ENCODE measurements at regions of chr19 and their contacts with region 1.

Region 1: DNA sequence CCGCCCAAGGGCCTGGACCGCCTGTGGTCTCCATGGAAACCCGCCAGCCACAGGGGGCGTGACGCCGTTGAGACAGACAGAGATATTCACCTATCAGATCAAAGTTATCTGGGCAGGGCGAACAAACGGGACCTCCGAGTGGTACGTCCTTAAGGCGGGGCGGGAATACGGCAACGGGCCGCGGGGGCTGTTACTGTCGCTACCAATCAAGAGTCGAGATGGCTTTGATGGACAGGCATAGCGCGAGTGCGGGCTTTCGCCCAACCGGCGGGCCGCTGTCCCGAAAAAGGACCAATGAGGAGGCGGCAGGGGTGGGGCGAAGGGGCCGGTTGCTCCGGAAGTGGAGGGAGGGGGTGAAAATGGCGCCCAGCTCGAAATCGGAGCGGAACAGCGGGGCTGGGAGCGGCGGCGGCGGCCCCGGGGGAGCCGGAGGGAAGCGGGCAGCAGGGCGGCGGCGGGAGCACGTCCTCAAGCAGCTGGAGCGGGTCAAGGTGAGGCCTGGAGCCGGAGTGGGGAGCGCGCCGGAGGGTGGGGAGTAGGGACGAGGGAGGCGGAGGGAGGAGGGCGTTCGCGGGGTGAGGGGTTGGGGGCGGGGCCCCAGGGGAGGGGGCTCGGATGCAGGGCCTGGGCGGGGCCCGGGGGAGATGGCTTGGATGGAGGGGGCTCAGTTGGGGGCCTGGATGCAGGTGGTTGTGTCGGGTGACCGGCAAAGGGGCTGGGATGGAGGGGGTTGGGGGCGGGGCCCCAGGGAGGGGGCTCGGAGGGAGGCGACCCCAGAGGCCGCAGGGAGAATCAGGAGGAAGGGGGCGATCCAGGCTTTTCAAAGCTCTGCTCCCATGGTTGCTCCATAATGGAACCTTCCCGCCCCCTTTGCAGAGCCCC is at the start of gene DCAF15:
- DNase-seq: peak; percentile 98
- ATAC-seq: peak; percentile 98
- H3K4me3 ChIP-seq: peak within 1 kb of the TSS; percentile 92 to 98 (median 95)
- H3K27ac ChIP-seq: peak within 1 kb of the TSS; percentile 68
- H3K4me1 ChIP-seq: peaks cover 10% of the 10 kb centered on the region
- H3K27me3 ChIP-seq: no peaks in the 10 kb centered on the region; a peak in 1 of 5 replicates
- CTCF ChIP-seq: no peak
- EP300 ChIP-seq: no peak
- POLR2A ChIP-seq: peak; percentile 58 to 64
- RAD21 ChIP-seq: no peak
- total RNA-seq, gene DCAF15: 8.5 and 14.0 TPM in 2 replicates

Region 2: DNA sequence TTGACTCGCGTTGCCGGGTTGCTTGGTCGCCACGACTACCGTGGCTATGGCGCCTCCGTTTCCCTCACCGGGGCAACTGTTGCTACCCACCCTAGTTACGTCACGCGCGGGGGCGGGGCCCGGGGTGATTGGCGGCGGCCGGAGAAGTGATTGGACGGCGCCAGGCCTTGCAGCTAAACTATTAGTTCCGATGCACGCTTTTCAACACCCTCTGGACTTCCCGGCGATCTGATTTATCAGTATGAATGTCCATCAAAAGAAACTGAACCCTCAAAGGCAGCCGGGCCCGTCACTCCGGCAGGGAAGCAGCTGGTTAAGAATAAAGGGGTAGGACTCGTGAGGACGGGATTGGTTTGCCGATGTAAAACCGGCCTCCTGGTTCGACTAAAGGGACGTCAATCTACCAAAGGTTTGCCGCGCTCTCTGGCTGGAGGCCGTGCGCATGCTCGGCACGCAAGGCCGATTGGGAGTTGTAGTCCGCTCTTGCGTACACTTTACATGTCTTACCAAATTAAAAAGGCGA is 53.9 kb after region 1 on chr19 and contains the start of gene RFX1:
- CTCF ChIA-PET with region 1: no interaction called
- POLR2A ChIA-PET with region 1: interaction called, 6 read pairs
- in situ Hi-C with region 1: no loop called
- intact Hi-C with region 1: loop called (anchors 1 kb)
- DNase-seq: peak; percentile 100
- ATAC-seq: peak; percentile 92
- H3K4me3 ChIP-seq: peak within 1 kb of the TSS; percentile 87 to 97 (median 91)
- H3K27ac ChIP-seq: peak within 1 kb of the TSS; percentile 96
- H3K4me1 ChIP-seq: peaks cover 19% of the 10 kb centered on the region
- H3K27me3 ChIP-seq: no peaks in the 10 kb centered on the region; a peak in 1 of 5 replicates
- CTCF ChIP-seq: no peak
- EP300 ChIP-seq: no peak
- POLR2A ChIP-seq: no peak; a peak in 1 of 4 replicates
- RAD21 ChIP-seq: no peak
- total RNA-seq, gene RFX1: 1.3 and 1.4 TPM in 2 replicates